ENCODE measurements at regions of chr9 and their contacts with region 1.

Region 1: GRCh38 chr9:28073270-28073669 is 500.0 kb upstream of the C9orf72 start:
- DNase-seq: peak; percentile 50 to 59
- H3K4me3 ChIP-seq: no peak overlapping the region
- H3K4me1 ChIP-seq: no peaks in the 10 kb centered on the region
- H3K27me3 ChIP-seq: no peaks in the 10 kb centered on the region

Region 2: GRCh38 chr9:27333241-27334052 is 739.8 kb before region 1 on chr9:
- in situ Hi-C with region 1: loop called (anchors 25 kb)
- DNase-seq: peak; percentile 76 to 77
- H3K4me3 ChIP-seq: no peak overlapping the region
- H3K4me1 ChIP-seq: peaks cover 4% of the 10 kb centered on the region
- H3K27me3 ChIP-seq: no peaks in the 10 kb centered on the region

Region 3: DNA sequence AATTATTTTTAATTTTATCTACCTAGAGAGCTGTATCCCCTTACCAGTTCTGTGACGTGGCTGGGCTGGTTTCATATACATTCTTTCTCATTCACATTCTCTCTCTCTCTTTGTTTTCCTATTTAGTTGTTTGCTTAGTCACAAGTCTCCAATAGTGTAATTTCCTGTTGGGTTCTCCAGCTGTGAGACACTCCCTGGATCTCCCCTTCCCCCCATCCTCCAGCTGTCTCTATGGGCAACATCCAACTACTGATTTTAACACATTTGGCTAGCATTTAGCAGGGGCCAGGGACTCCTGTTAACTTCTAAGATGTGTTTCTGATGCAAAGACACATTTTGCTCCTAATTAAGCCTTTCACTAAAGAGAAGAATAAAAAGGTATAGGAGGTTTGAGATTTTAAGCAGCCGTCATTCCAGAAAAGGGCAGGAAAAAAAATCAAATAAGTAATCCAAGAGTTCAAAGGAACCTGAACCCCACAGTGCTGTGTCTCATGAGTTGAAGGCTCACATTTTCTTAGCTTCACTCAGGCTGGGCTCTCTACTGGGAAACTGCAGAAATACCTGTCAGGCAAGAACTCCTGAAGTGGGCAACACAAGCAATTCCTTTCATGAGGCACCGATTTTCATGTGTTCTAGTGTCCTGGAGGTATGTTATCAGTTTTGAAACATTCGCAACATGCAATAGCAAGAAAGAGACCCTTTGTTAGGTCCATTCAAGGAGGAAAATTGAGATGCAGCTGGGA is 301.3 kb before region 1 on chr9:
- in situ Hi-C with region 1: loop called (anchors 25 kb)
- DNase-seq: no peak
- H3K4me3 ChIP-seq: no peak overlapping the region
- H3K4me1 ChIP-seq: no peaks in the 10 kb centered on the region
- H3K27me3 ChIP-seq: no peaks in the 10 kb centered on the region; the same call in 1 of the 2 replicates

Measured in HAP-1 (cell line).